ENCODE measurements at regions of chr17 and their contacts with region 1.

Region 1: DNA sequence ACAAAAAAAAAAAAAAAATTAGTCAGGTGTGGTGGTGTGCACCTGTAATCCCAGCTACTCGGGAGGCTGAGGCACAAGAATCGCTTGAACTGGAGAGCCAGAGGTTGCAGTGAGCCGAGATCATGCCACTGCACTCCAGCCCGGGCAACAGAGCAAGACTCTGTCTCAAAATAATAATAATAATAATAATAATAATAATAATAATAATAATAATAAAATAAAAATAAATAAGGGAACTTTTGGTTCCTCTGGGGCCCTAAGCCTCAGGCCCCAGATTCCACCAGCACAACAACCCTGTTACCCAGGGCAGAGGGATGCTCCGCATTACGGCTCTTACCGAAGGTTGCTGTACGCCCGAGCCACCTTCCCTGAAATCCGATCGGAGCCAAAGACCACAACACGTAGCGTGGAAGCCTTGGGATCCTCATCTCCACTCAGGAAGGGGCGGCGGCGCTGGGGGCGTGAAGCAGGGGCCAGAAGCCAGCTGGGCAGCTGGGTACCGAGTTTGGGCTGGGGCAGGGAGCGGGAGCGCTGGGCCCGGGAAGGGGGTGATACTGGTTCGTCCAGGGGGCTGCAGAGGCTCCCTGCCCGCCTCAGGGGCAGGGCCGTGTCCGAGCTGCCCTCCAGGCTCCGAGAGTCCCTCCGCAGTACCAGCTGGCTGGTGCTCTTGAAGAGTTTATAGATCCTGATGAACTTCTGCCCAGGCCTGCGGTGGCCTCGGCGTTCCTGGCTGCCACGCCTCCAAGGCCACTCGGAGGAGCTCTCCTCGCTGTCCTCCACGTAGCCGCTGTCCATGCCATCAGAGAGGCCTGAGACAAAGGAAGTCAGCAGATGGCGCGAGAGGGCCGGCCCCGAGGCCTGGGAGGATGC is 20.6 kb upstream of the PIK3R6 start:
- DNase-seq: no peak
- H3K4me3 ChIP-seq: no peak overlapping the region
- H3K27ac ChIP-seq: no peak overlapping the region
- H3K4me1 ChIP-seq: no peaks in the 10 kb centered on the region
- H3K27me3 ChIP-seq: no peaks in the 10 kb centered on the region
- CTCF ChIP-seq: no peak
- POLR2A ChIP-seq: no peak

Region 2: DNA sequence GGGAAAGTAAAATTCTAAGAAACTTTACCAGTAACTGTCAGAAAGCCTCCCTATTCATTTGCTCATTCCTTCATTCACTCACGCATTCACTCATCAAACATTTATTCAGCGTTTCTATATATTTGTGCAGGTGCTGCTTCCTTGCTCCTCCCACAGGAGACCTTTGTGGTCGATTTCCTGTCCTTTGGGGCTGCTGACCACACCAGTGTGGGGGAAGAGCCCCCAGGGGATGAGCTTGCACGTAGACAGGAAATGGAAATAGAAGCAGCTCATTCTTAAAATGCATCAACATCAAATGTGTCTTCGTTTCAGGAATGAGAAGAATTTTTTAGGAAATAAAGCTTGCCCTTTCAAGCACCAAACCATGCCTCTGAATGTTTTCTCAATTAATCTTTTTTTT is 30.1 kb before region 1 on chr17:
- intact Hi-C with region 1: no loop called
- DNase-seq: peak in 1 of 2 donors; percentile 54
- H3K4me3 ChIP-seq: no peak overlapping the region
- H3K27ac ChIP-seq: no peak overlapping the region
- H3K4me1 ChIP-seq: no peaks in the 10 kb centered on the region
- H3K27me3 ChIP-seq: no peaks in the 10 kb centered on the region
- CTCF ChIP-seq: no peak
- POLR2A ChIP-seq: no peak

Region 3: GRCh38 chr17:8918807-8919465 is 30.9 kb after region 1 on chr17:
- intact Hi-C with region 1: loop called (anchors 2 kb)
- DNase-seq: no peak
- H3K4me3 ChIP-seq: no peak overlapping the region
- H3K27ac ChIP-seq: no peak overlapping the region
- H3K4me1 ChIP-seq: no peaks in the 10 kb centered on the region
- H3K27me3 ChIP-seq: peaks cover 0 to 3% of the 10 kb centered on the region in 2 donors
- CTCF ChIP-seq: no peak
- POLR2A ChIP-seq: no peak

Region 4: DNA sequence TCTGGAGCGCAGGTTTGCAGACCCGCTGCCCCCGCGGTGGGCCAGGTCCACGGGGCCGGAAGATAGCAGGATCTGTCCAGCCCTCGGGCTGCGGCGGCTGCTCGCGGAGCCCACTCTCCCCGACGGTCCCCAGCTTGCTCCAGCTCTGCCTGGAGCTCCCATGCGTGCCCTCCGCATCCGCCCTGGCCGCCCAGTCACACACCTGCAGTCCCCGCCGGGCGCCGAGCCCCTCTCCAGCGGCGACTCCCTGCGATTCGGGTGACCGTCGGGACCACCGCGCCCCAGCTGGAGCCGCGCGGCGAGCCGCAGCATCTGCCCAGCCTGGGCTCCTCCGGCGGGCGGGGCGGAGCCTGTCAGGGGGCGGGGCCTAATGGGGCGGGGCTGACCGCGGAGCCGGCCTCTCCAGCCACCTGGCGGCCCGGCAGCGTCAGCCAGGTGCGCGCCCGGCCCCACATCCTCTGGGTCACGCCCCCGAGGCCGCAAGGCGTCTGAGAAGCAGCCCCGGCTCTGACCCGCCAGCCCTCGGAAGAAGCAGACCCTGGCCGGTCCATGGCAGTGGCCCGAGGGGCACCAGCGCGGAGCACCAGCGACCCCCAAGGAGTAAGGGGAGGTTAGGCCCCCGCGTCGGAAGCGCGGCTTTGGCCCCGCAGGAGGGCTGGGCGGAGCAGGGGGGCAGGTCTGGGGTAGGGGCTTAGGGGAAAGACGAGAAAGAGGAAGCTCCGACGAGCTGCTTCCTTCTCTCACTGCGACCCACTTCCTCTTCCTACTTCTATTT is 77.5 kb after region 1 on chr17 and contains the start of gene PIK3R5:
- intact Hi-C with region 1: no loop called
- DNase-seq: no peak
- H3K4me3 ChIP-seq: peak within 1 kb of the TSS; percentile 42 to 56 (median 52)
- H3K27ac ChIP-seq: peak within 1 kb of the TSS in 1 of 2 donors; percentile 43
- H3K4me1 ChIP-seq: no peaks in the 10 kb centered on the region
- H3K27me3 ChIP-seq: peaks cover 6 to 28% of the 10 kb centered on the region in 2 donors
- CTCF ChIP-seq: no peak
- POLR2A ChIP-seq: no peak
- total RNA-seq, gene PIK3R5: 9.8 to 28.6 (median 12.3) TPM